AG04450 (cell line): ENCODE measurements at regions of chr7 and their contacts with region 1.

Region 1: DNA sequence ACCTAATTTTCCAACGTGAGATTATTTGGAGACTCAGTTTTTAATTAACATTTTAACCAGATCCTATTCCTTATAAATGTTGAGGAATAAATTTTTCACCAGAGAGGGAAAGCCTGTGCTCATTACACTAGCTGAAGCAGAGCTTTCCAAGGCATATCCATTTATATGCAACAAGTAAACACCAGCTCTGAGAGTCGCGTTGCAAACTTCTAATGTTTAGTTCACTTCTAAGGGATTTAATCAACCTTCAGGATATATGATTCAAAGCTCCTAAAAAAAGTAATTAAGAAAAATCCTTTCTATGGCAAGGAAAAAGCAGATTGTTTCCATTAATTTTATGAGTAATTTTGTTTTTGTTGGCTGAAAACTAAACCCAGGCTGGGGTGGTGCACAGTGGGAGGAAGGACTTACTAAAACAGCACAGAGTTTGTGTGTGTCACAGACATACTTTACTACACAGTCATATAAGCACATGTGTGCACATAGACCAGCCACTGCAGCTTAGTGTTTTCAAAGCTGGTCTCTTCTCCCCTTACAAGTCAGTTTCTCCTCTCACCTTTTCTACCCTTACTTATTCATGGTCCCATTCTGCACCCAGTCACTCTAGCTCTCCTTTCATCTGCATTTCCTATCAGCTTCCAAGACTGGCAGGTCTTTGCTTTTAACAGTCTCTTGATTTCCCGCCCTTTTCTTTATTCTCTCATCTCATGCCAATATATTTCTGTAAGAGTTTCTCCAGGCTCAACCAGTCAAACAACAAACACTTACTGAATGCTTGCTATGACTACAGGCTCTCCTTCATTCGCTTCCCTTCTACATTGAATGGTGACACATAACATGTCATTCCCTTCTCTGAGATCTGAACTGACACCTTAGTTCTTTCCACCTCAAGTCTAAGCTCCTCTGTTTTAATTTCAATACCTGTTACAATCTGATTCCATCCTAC is 81.1 kb upstream of the FZD1 start:
- DNase-seq: peak; percentile 92
- H3K4me3 ChIP-seq: no peak overlapping the region
- H3K27ac ChIP-seq: no peak overlapping the region
- H3K27me3 ChIP-seq: no peaks in the 10 kb centered on the region
- CTCF ChIP-seq: no peak

Region 2: GRCh38 chr7:91151916-91152315 is 31.2 kb before region 1 on chr7:
- CTCF ChIA-PET with region 1: no interaction called
- POLR2A ChIA-PET with region 1: no interaction called
- DNase-seq: no peak
- H3K4me3 ChIP-seq: no peak overlapping the region
- H3K27ac ChIP-seq: no peak overlapping the region
- H3K27me3 ChIP-seq: no peaks in the 10 kb centered on the region
- CTCF ChIP-seq: no peak

Region 3: DNA sequence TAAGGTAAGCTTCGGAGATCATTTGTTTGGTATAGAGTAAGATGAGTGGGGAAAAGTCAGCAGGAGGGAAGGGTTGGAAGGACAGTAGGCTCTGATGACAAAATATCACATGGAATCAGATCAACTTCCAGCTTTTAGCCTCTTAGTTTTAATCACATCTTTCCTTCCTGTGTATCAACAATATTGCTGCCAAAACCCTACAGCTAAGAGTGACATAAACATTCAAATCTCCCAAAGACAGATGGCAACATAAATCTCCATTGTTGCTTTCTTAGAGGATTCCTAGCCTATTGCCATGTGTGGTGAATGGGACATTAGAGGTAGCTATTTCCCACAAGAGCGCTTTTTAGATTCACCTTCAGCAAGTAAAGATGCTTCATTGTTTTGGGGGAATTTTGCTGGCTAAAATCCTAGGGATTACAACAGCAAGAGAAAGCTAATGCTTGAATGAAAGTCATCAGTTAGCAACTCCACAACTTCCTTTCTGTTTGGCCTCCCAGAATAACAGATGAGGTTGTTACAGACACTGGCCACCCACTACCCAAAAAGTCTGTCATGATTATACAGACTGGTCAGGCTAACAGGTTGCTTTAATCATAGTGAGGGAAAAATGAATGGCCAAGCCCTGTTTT is 46.0 kb after region 1 on chr7:
- CTCF ChIA-PET with region 1: no interaction called
- POLR2A ChIA-PET with region 1: interaction called, 10 read pairs
- DNase-seq: no peak
- H3K4me3 ChIP-seq: no peak overlapping the region
- H3K27ac ChIP-seq: peak overlapping the region; percentile 21
- H3K27me3 ChIP-seq: no peaks in the 10 kb centered on the region
- CTCF ChIP-seq: no peak